Activated T-helper 1 cell treated with anti-CD3 and anti-CD28 coated beads, Interleukin-12 subunit alpha, Interleukin-12 subunit beta, Interleukin-2, Interleukin-4 antibody, amounts not matched to agents 30 ng/mL and 10 ng/mL and 1 ng/mL, durations not matched to agents 14 hours and 24 hours and 36 hours (primary cell): ENCODE measurements at regions of chr5 and their contacts with region 1.

Region 1: GRCh38 chr5:81006947-81007636 is 46.9 kb downstream of the RASGRF2 start:
- DNase-seq: peak; percentile 50
- H3K4me3 Mint-ChIP-seq: peak overlapping the region; percentile 71
- H3K27ac Mint-ChIP-seq: peak overlapping the region; percentile 81
- H3K4me1 Mint-ChIP-seq: peaks cover 54% of the 10 kb centered on the region
- H3K27me3 Mint-ChIP-seq: no peaks in the 10 kb centered on the region

Region 2: DNA sequence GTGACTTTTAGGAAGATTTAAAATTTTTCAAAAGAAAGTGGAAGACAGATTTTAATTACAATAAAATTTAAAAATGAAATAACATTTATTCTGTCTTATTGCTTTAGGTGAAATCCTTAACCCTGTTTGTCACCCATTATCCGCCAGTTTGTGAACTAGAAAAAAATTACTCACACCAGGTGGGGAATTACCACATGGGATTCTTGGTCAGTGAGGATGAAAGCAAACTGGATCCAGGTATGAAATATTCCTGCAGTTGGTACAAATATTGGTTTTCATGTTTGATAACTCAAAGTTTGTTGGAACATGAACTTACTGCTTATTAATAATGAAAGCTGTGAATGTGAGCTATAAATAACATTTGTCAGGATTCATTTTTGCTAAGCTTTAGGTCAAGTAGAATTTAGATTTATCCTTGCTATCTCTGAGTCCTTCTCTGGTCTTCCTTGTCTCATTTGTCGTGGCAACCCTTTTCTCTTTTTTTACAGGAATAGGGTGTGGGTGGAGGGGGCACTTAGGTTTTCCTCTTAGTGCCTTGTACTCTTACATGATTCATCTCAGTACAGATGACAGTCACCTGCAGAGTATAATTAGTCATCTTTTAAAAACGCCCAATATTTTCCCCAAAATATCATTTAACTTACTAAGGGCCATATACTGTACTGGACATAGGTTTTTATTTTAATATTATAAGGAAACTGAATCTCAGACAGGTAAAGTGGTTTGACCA is 142.2 kb before region 1 on chr5:
- intact Hi-C with region 1: loop called (anchors 2 kb)
- DNase-seq: no peak
- H3K4me3 Mint-ChIP-seq: peak overlapping the region; percentile 3
- H3K27ac Mint-ChIP-seq: peak overlapping the region; percentile 38
- H3K4me1 Mint-ChIP-seq: peaks cover 65% of the 10 kb centered on the region
- H3K27me3 Mint-ChIP-seq: no peaks in the 10 kb centered on the region

Region 3: DNA sequence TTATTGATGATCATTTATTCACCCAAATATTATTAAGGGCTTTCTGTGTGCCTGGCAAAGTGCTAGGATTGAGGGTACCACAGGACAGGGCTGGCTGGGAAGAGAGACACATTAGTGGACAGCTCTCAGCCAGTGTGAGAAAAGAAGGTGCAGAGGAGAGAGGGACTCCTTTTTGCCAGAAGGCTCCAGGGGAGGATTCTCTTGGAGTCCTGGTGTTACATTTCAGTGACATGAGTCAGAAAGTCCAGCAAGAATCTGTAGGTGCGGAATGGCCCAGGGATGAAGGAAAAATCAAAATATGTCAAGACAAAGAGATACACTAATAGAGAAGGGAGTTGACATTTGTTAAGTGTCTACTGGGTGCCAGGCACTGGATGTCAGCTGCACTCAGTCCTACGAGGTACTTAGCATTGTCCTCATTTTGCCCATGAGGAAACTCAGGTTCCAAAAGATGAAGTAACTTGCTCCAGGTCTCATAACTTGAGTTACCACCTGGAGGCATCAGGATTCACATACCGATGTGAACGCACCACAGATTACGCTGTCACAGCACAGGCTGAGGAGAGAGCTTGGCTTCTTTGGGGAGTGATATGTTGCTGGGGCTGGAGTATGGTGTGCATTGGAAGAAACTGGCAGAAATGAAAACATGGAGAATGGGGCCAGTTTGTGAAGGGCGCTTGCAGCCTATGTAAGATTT is 13.5 kb after region 1 on chr5:
- intact Hi-C with region 1: loop called (anchors 1 kb)
- DNase-seq: no peak
- H3K4me3 Mint-ChIP-seq: no peak overlapping the region
- H3K27ac Mint-ChIP-seq: no peak overlapping the region
- H3K4me1 Mint-ChIP-seq: peaks cover 61% of the 10 kb centered on the region
- H3K27me3 Mint-ChIP-seq: no peaks in the 10 kb centered on the region

Region 4: DNA sequence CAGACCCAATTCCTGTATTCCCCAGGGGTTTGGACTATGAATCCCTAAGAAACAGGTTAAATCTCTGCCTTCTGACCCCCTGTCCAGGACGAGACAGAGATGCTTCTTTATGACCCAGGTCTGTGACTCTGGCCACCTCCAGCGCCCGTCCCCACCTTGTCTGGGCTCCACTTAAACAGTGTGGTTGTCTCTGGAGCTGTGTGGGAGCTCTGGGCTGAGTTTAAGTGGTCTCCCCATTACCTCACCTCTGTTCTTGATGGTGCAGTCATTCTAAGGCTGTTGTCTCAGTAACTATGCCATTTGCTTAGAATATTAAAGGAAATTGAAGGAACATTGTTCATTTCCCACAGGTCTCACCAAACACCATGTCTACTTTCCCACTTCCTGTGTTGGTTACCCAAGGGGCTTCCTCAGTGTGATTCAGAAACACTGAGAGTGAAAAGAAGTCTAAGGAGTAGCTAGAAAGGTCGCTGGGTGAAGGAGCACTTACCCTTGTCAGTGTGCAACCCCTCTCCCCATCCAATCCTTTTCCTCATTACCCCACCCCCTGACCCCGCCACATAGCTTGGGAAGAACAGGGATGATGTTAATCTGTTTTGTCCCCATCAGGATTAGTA is 98.3 kb after region 1 on chr5:
- intact Hi-C with region 1: loop called (anchors 2 kb)
- DNase-seq: no peak
- H3K4me3 Mint-ChIP-seq: peak overlapping the region; percentile 15
- H3K27ac Mint-ChIP-seq: no peak overlapping the region
- H3K4me1 Mint-ChIP-seq: peaks cover 32% of the 10 kb centered on the region
- H3K27me3 Mint-ChIP-seq: no peaks in the 10 kb centered on the region